K562 (cell line): ENCODE measurements at regions of chr19 and their contacts with region 1.

Region 1: DNA sequence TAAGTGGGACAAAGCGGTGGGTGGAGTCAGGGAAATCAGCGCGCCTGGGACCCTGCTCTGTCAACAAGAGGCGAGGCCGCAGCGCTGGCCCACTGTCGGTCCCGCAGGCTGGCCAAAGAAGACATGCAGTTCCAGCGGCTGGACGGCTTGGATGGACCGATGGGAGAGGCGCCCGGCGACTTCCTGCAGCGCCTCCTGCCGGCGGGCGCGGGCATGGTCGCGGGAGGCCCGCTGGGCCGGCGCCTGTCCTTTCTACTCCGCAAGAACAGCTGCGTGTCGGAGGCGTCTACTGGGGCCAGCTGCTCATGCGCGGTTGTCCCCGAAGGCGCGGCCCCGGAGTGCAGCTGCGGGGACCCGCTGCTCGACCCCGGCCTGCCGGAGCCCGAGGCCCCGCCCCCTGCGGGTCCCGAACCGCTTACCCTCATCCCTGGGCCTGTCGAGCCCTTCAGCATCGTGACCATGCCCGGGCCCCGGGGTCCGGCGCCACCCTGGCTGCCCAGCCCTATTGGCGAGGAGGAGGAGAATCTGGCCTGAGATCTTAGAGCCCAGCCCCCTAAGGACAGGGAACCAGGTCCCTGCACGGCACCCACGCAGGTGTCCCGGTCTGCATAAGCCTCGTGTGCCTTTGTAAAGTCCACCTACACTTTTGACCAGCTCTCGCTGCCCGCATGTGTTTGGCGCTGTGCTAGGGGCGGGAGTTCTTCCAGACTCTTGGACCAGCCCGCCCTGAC is 6.1 kb downstream of the BEST2 start:
- DNase-seq: peak; percentile 84 to 88 (median 84)
- ATAC-seq: peak; percentile 97
- H3K4me3 ChIP-seq: peak overlapping the region; percentile 38
- H3K27ac ChIP-seq: no peak overlapping the region
- H3K4me1 ChIP-seq: peaks cover 5 to 40% of the 10 kb centered on the region in 2 experiments; a peak in 3 of 5 replicates
- H3K27me3 ChIP-seq: peaks cover 2 to 11% of the 10 kb centered on the region in 2 experiments; a peak in 3 of 5 replicates
- CTCF ChIP-seq: peak; percentile 94 to 97 (median 96)
- EP300 ChIP-seq: peak; percentile 9; the same call in 1 of the 2 replicates
- POLR2A ChIP-seq: no peak
- RAD21 ChIP-seq: peak; percentile 67 to 79

Region 2: GRCh38 chr19:12716861-12717260 is 40.8 kb before region 1 on chr19:
- CTCF ChIA-PET with region 1: interaction called, 5 read pairs
- POLR2A ChIA-PET with region 1: interaction called, 4 read pairs
- in situ Hi-C with region 1: no loop called
- intact Hi-C with region 1: loop called (anchors 1 kb)
- DNase-seq: peak in 2 of 4 experiments; percentile 64 to 80
- ATAC-seq: peak; percentile 77
- H3K4me3 ChIP-seq: no peak overlapping the region
- H3K27ac ChIP-seq: no peak overlapping the region
- H3K4me1 ChIP-seq: peaks cover 8 to 42% of the 10 kb centered on the region in 2 experiments; a peak in 3 of 5 replicates
- H3K27me3 ChIP-seq: no peaks in the 10 kb centered on the region
- CTCF ChIP-seq: peak; percentile 63 to 69 (median 63)
- EP300 ChIP-seq: no peak
- POLR2A ChIP-seq: no peak
- RAD21 ChIP-seq: peak; percentile 60 to 70

Region 3: DNA sequence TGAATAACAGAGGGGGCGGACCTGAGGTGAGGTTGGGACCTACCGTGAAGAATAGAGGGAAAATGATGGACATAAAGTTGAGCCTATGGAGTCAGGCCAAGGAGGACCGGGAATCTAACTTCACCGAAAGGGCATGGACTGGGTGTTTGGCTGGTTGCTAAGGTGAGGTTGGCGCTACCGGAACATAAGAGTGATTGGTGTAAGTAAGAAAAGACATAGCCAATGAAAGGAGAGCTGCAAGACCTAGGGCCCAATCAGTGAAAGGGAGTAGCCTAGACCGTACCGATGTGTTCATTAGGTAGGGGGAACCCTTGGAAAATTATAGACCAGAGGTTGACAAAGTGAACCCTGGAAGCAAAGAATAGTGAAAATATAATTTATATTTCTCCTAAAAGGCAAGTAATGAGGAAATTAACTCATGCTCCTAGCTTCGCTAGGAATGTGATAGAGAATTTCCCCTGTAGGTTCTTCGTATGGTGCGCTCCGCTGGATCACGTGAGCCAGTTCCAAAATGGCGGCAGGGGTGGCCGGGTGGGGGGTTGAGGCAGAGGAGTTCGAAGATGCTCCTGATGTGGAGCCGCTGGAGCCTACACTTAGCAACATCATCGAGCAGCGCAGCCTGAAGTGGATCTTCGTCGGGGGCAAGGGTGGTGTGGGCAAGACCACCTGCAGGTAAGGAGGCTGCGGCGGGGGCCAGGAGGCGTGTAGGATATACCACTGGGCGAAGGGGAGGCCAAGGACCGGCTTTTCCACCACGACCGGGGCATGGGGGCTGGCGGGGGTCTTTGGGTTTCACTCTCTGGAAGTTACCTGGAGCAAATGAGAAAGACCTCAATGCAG is 20.5 kb before region 1 on chr19 and contains the start of gene GET3:
- CTCF ChIA-PET with region 1: no interaction called
- POLR2A ChIA-PET with region 1: interaction called, 6 read pairs
- in situ Hi-C with region 1: no loop called
- intact Hi-C with region 1: loop called (anchors 1 kb)
- DNase-seq: peak; percentile 86 to 98 (median 92)
- ATAC-seq: peak; percentile 92
- H3K4me3 ChIP-seq: peak within 1 kb of the TSS; percentile 63
- H3K27ac ChIP-seq: peak within 1 kb of the TSS; percentile 97
- H3K4me1 ChIP-seq: peaks cover 11 to 25% of the 10 kb centered on the region in 2 experiments
- H3K27me3 ChIP-seq: no peaks in the 10 kb centered on the region
- CTCF ChIP-seq: no peak
- EP300 ChIP-seq: no peak; the same call in 1 of the 2 replicates
- POLR2A ChIP-seq: peak; percentile 85
- RAD21 ChIP-seq: no peak
- polyA plus RNA-seq, gene GET3: 8.3 to 29.1 TPM

Region 4: DNA sequence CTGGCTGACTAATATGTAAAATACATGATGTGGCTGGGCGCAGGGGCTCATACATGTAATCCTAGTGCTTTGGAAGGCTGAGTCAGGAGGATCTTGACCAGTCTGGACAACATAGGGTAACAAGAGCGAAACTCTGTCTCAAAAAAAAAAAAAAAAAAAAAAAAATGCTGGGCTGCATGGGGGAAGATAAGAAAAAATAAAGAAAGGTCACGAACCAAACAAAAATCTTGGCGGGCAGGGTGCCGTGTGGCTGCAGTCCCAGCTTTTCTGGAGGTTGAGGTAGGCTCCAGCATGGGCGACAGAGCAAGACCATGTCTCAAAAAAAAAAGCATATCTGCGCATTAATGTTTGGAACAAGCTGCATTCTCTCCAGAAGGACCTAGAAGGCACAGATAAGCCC is 57.4 kb after region 1 on chr19:
- CTCF ChIA-PET with region 1: no interaction called
- POLR2A ChIA-PET with region 1: no interaction called
- in situ Hi-C with region 1: no loop called
- intact Hi-C with region 1: no loop called
- DNase-seq: no peak
- ATAC-seq: peak; percentile 64
- H3K4me3 ChIP-seq: no peak overlapping the region
- H3K27ac ChIP-seq: no peak overlapping the region
- H3K4me1 ChIP-seq: peaks cover 2 to 11% of the 10 kb centered on the region in 2 experiments; a peak in 1 of 5 replicates
- H3K27me3 ChIP-seq: no peaks in the 10 kb centered on the region
- CTCF ChIP-seq: no peak
- EP300 ChIP-seq: no peak
- POLR2A ChIP-seq: no peak
- RAD21 ChIP-seq: no peak